Common myeloid progenitor, CD34-positive (primary cell): ENCODE measurements at regions of chr5 and their contacts with region 1.

Region 1: GRCh38 chr5:139517683-139518564 is 35.4 kb upstream of the STING1 start:
- DNase-seq: peak; percentile 77 to 89 (median 88)
- H3K4me3 ChIP-seq: peak overlapping the region; percentile 51 to 83 (median 60)
- H3K27ac ChIP-seq: peak overlapping the region in 1 of 2 experiments; percentile 74
- H3K4me1 ChIP-seq: peaks cover 2 to 26% (median 19%) of the 10 kb centered on the region in 4 experiments
- H3K27me3 ChIP-seq: no peaks in the 10 kb centered on the region

Region 2: DNA sequence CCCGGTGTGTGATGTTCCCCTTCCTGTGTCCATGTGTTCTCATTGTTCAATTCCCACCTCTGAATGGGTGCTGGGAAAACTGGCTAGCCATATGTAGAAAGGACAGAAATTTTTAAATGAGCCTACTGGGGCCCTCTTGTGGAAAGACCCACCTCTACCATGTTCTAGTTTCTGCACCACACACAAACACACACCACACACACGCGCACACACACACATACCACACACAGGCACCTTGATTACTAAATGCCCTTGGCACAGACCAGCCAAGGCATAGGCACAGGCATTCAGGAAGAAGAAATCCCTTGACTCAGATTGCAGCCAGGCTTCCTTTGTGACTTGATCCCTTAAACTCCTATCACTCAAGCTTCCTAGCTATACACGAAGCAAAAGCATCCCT is 380.2 kb before region 1 on chr5:
- CTCF ChIA-PET with region 1: no interaction called
- POLR2A ChIA-PET with region 1: no interaction called
- DNase-seq: peak; percentile 43 to 64 (median 57)
- H3K4me3 ChIP-seq: no peak overlapping the region
- H3K27ac ChIP-seq: no peak overlapping the region
- H3K4me1 ChIP-seq: peaks cover 0 to 48% (median 40%) of the 10 kb centered on the region in 4 experiments
- H3K27me3 ChIP-seq: no peaks in the 10 kb centered on the region

Region 3: DNA sequence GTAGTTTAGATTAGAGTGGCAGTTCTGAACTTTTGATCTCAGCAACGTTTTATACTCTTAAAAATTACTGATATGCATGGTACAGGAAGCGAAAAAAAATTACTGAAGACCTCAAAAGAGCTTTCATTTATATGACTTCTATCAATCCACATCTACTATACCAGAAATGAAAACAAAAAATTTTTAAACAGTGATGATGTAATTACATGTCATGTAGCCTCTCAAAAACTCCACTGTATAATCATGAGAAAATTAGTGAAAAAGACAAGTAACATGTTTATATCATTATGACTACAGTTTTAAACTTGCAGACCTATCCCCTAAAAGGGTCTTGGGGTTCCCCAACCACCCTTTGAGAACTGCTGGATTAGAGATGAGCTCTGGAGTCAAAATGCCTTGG is 87.9 kb before region 1 on chr5:
- CTCF ChIA-PET with region 1: interaction called, 359 read pairs
- POLR2A ChIA-PET with region 1: no interaction called
- DNase-seq: no peak
- H3K4me3 ChIP-seq: no peak overlapping the region
- H3K27ac ChIP-seq: no peak overlapping the region
- H3K4me1 ChIP-seq: peaks cover 0 to 10% (median 2%) of the 10 kb centered on the region in 4 experiments
- H3K27me3 ChIP-seq: no peaks in the 10 kb centered on the region

Region 4: DNA sequence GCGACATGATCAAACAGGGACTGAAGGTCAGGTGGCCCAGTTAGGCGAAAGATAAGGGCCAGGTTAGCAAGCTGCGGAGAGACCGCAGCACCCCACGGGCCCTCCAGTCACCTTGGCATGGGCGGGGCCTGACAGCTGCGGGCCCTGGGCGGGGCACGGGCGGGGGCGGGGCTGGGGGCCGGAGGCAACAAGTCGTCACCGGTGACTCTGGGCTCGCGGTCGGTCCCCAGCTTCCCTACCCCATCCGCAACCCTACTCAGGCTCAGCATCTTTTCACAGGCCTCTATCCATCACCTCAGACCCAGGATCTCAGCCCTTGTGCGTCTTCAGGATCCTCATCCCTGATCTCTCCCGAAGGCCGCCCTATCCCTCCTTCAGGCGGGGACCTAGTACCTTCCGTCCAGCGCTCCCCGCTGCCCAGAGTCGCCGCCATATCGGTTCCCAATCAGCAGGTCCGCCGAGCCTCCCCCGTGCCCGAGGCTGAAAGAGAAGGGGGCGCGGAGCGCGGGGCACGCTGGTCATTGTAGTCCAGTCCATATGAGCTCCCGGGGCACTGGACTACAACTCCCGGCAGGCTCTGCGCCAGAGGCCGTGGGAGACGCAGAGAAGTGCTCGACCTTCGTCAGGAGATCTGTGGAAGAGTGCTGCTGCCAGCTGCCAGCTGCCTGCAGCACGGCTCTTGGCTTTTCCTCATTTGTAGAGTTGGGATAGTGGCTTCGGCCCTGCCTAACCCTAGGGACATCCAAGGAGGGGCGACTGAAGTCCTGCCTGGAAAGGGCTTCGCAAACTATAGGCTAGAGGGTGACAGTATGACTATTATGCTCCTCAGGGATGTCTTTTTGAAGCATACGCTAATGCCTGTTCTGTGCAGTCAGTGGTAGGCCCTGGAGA is 78.7 kb before region 1 on chr5 and contains the start of gene DNAJC18:
- CTCF ChIA-PET with region 1: interaction called, 25 read pairs
- POLR2A ChIA-PET with region 1: interaction called, 4 read pairs
- DNase-seq: peak; percentile 86 to 91 (median 89)
- H3K4me3 ChIP-seq: peak within 1 kb of the TSS; percentile 71 to 91 (median 85)
- H3K27ac ChIP-seq: peak within 1 kb of the TSS; percentile 81 to 91
- H3K4me1 ChIP-seq: peaks cover 8 to 38% (median 33%) of the 10 kb centered on the region in 4 experiments
- H3K27me3 ChIP-seq: no peaks in the 10 kb centered on the region

Region 5: GRCh38 chr5:139458580-139459406 is 59.1 kb before region 1 on chr5:
- CTCF ChIA-PET with region 1: interaction called, 16 read pairs
- POLR2A ChIA-PET with region 1: no interaction called
- DNase-seq: peak; percentile 85 to 96 (median 95)
- H3K4me3 ChIP-seq: no peak overlapping the region
- H3K27ac ChIP-seq: peak overlapping the region in 1 of 2 experiments; percentile 9
- H3K4me1 ChIP-seq: peaks cover 0 to 19% (median 10%) of the 10 kb centered on the region in 4 experiments
- H3K27me3 ChIP-seq: no peaks in the 10 kb centered on the region

Region 6: GRCh38 chr5:139482050-139482889 is 35.7 kb before region 1 on chr5 and contains the start of gene STING1:
- CTCF ChIA-PET with region 1: interaction called, 112 read pairs
- POLR2A ChIA-PET with region 1: interaction called, 5 read pairs
- DNase-seq: peak; percentile 86 to 93 (median 92)
- H3K4me3 ChIP-seq: peak within 1 kb of the TSS; percentile 40 to 89 (median 79)
- H3K27ac ChIP-seq: peak within 1 kb of the TSS; percentile 81 to 91
- H3K4me1 ChIP-seq: peaks cover 12 to 71% (median 59%) of the 10 kb centered on the region in 4 experiments
- H3K27me3 ChIP-seq: no peaks in the 10 kb centered on the region

Region 7: GRCh38 chr5:139492700-139493192 is 25.2 kb before region 1 on chr5:
- CTCF ChIA-PET with region 1: interaction called, 18 read pairs
- POLR2A ChIA-PET with region 1: no interaction called
- DNase-seq: peak in 2 of 3 donors; percentile 55 to 64
- H3K4me3 ChIP-seq: peak overlapping the region in 4 of 7 experiments; percentile 1 to 37 (median 16)
- H3K27ac ChIP-seq: no peak overlapping the region
- H3K4me1 ChIP-seq: peaks cover 8 to 39% (median 24%) of the 10 kb centered on the region in 4 experiments
- H3K27me3 ChIP-seq: no peaks in the 10 kb centered on the region

Region 8: DNA sequence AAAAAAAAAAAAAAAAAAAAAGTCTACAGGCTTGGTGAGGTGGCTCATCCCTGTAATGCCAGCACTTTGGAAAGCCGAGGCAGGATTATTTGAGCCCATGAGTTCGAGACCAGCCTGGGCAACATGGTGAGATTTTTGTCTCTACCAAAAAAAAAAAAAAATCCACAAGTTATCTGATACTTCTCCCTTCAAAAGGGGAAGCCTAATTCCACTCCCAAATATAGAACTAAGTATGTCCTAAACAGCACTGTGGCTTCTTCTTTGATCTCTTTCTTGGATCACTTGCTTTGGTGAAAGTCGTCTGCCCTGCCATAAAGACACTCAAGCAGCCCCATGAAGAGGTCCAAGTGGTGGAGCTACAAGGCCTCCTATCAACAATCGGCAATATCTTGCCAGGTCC is 16.5 kb before region 1 on chr5:
- CTCF ChIA-PET with region 1: interaction called, 34 read pairs
- POLR2A ChIA-PET with region 1: no interaction called
- DNase-seq: no peak
- H3K4me3 ChIP-seq: no peak overlapping the region
- H3K27ac ChIP-seq: no peak overlapping the region
- H3K4me1 ChIP-seq: peaks cover 0 to 12% (median 5%) of the 10 kb centered on the region in 4 experiments
- H3K27me3 ChIP-seq: no peaks in the 10 kb centered on the region

Region 9: DNA sequence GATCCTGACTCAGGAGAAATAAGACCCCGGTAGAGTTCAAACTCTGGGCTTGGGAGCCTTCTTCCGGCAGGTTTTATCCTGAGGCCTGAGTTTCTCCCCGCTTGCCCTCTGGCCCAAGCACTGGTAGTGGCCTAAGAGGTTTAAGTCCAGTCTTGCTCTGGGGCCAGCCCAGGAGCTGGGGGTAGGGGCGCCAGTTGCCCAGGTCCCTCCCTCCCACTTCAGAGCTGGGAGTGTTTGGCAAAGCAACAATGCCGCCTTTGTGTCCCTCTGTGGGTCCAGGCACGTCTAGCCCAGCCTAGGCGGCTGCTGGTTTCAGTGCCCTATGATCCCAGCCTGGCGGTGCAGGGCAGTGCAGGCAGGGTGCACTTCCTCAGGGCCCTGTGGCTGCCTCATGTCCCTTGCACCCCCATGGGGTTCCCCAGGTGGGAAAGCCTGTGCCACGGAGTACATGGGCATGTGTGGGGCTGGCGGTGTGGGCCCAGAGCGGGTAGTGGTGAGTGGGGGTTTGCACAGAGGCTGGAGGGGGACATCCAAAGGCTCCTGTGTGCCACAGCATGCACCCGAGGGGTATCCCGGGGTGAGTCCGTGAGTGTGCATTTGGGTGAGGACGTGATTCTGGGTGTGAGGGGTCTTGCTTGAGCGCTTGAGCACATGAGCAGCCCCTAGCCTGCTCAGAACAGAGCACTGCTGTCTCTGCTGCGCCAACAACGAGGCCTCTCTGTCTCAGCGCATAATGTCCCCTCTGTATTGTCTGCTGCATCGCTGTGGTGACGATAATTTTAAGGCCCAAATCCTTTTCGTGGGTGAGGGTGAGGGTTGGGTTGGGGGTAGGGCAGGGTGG is 216.0 kb after region 1 on chr5:
- CTCF ChIA-PET with region 1: no interaction called
- POLR2A ChIA-PET with region 1: no interaction called
- DNase-seq: no peak
- H3K4me3 ChIP-seq: no peak overlapping the region
- H3K27ac ChIP-seq: no peak overlapping the region
- H3K4me1 ChIP-seq: peaks cover 0 to 4% (median 0%) of the 10 kb centered on the region in 4 experiments
- H3K27me3 ChIP-seq: no peaks in the 10 kb centered on the region